ENCODE measurements at regions of chr14 and their contacts with region 1.

Region 1: DNA sequence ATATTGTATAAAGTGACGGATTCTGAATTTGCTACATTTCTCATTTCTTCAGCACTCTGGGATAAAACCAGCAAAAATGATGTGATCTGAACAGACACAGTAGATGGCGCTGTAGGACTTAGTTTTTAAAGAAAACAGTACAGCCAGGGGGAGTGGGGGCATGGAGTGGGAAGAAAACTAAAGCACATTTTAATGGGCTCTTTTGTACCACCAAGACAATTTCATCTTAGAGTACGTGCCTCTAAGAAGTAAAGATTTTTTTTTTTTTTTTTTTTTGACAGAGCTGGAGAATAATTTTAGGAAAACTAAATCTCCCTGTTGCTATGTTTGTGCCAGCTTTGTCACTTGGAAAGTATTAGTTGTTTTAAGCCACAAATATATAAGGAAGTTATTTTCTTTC is 124.4 kb downstream of the RAD51B start:
- DNase-seq: peak; percentile 65
- H3K4me3 ChIP-seq: no peak overlapping the region
- H3K27ac ChIP-seq: no peak overlapping the region
- H3K27me3 ChIP-seq: no peaks in the 10 kb centered on the region
- CTCF ChIP-seq: peak; percentile 73

Region 2: DNA sequence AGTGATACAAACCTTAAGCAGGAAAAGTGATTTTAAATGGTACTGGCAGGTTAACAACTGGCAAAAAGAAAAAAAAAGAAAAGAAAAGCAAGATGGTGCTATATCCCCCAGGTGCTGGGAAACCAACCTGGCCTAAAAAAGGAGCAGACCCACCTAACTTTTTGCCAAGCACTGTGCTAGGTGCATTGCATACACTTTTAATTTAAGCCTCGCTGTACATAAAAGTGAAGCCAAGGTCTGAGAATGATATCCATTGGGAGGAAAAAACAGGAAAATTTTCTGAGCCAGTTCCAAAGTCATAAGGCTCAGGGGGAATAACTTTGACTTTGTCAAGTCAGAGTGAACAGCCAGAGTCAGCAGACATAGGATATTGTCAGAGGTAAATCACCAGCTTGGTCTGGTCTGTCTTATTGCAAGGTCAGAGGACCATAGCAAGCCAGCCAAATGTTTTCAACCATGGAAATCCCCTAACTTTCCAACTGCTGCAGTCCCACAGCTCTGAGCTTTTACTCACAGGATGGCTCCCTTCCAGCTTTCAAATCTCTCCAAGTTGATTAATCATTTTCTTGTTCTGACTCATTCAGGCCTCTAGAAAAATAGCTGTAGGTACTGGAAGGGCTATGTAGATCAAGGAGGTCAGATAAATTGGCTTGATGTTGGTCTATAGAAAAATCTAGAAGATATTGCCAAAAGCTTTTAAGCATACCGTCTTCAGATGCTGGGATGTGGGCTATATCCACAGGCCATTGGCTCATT is 288.5 kb after region 1 on chr14:
- CTCF ChIA-PET with region 1: interaction called, 14 read pairs
- POLR2A ChIA-PET with region 1: interaction called, 7 read pairs
- DNase-seq: peak; percentile 98
- H3K4me3 ChIP-seq: no peak overlapping the region
- H3K27ac ChIP-seq: peak overlapping the region; percentile 87
- H3K27me3 ChIP-seq: no peaks in the 10 kb centered on the region
- CTCF ChIP-seq: no peak

Region 3: GRCh38 chr14:68248481-68249255 is 304.7 kb after region 1 on chr14:
- CTCF ChIA-PET with region 1: interaction called, 31 read pairs
- POLR2A ChIA-PET with region 1: interaction called, 4 read pairs
- DNase-seq: no peak
- H3K4me3 ChIP-seq: no peak overlapping the region
- H3K27ac ChIP-seq: peak overlapping the region; percentile 33
- H3K27me3 ChIP-seq: no peaks in the 10 kb centered on the region
- CTCF ChIP-seq: peak; percentile 60

Region 4: DNA sequence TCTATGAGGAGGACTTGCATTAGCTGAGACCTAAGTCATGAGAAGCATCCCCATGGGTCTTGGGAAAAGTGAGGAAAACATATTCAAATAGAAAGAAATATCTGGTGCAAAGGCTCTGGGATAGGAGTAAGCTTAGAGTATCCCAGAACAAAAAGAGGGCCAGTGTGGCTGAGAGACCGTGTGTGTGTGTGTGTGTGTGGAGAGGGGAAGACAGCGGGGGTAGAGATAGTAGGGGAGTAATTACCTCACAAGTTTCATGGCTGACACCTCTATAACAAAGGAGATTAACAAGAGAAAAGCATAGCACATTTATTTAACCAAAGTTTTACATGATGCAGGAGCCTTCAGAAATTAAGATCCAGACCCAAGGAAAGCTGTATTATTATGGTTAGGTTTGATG is 316.2 kb after region 1 on chr14:
- CTCF ChIA-PET with region 1: interaction called, 12 read pairs
- POLR2A ChIA-PET with region 1: no interaction called
- DNase-seq: no peak
- H3K4me3 ChIP-seq: no peak overlapping the region
- H3K27ac ChIP-seq: no peak overlapping the region
- H3K27me3 ChIP-seq: no peaks in the 10 kb centered on the region
- CTCF ChIP-seq: no peak

Region 5: GRCh38 chr14:68337279-68337678 is 393.3 kb after region 1 on chr14:
- CTCF ChIA-PET with region 1: no interaction called
- POLR2A ChIA-PET with region 1: no interaction called
- DNase-seq: no peak
- H3K4me3 ChIP-seq: no peak overlapping the region
- H3K27ac ChIP-seq: no peak overlapping the region
- H3K27me3 ChIP-seq: no peaks in the 10 kb centered on the region
- CTCF ChIP-seq: no peak

Region 6: GRCh38 chr14:68788996-68789820 is 845.3 kb after region 1 on chr14:
- CTCF ChIA-PET with region 1: interaction called, 15 read pairs
- POLR2A ChIA-PET with region 1: interaction called, 4 read pairs
- DNase-seq: no peak
- H3K4me3 ChIP-seq: peak overlapping the region; percentile 100
- H3K27ac ChIP-seq: peak overlapping the region; percentile 100
- H3K27me3 ChIP-seq: no peaks in the 10 kb centered on the region
- CTCF ChIP-seq: peak; percentile 76

Region 7: DNA sequence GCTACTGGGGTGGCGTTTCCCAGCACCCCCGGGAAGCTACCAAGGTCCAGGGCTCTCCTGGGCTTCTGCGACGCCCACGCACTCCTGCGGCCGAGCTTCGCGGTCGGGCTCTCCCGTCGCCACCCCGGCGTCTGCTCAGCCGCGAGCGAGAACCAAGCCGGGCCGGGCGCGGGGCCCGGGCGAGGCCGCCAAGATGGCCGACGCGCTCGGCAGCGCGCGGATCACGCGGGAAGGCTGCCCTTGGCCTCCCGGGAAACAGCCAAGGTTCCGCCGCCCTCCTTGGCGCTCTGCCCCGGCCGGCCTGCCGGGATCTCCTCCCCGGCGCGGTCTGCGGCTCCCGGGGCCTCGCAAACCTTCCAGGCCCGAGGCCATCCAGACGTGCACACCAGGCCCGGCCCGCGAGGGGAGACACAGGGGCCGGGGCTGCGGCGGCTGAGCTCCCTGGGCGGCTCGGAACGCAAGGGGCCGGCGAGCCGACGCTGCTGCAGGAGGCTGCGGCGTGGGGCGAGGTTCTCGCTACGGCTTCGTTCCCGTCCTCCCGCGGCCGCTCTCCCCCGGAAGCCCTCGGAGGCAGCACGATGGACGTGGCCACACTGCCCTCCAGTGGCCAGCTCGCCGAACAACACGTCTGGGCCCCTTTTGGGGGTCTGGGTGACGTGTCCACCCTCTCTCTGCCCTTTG is 872.5 kb after region 1 on chr14:
- CTCF ChIA-PET with region 1: interaction called, 17 read pairs
- POLR2A ChIA-PET with region 1: interaction called, 7 read pairs
- DNase-seq: peak; percentile 79
- H3K4me3 ChIP-seq: peak overlapping the region; percentile 46
- H3K27ac ChIP-seq: peak overlapping the region; percentile 95
- H3K27me3 ChIP-seq: no peaks in the 10 kb centered on the region
- CTCF ChIP-seq: peak; percentile 94

Region 8: GRCh38 chr14:68843471-68844209 is 899.7 kb after region 1 on chr14:
- CTCF ChIA-PET with region 1: interaction called, 22 read pairs
- POLR2A ChIA-PET with region 1: no interaction called
- DNase-seq: peak; percentile 34
- H3K4me3 ChIP-seq: no peak overlapping the region
- H3K27ac ChIP-seq: no peak overlapping the region
- H3K27me3 ChIP-seq: no peaks in the 10 kb centered on the region
- CTCF ChIP-seq: peak; percentile 93